PC-9 (cell line): ENCODE measurements at regions of chr5 and their contacts with region 1.

Region 1: GRCh38 chr5:10401498-10401897 is 40.2 kb upstream of the ROPN1L start:
- DNase-seq: no peak
- H3K4me3 ChIP-seq: no peak overlapping the region
- H3K27ac ChIP-seq: no peak overlapping the region
- H3K4me1 ChIP-seq: no peaks in the 10 kb centered on the region
- H3K27me3 ChIP-seq: no peaks in the 10 kb centered on the region
- CTCF ChIP-seq: no peak

Region 2: DNA sequence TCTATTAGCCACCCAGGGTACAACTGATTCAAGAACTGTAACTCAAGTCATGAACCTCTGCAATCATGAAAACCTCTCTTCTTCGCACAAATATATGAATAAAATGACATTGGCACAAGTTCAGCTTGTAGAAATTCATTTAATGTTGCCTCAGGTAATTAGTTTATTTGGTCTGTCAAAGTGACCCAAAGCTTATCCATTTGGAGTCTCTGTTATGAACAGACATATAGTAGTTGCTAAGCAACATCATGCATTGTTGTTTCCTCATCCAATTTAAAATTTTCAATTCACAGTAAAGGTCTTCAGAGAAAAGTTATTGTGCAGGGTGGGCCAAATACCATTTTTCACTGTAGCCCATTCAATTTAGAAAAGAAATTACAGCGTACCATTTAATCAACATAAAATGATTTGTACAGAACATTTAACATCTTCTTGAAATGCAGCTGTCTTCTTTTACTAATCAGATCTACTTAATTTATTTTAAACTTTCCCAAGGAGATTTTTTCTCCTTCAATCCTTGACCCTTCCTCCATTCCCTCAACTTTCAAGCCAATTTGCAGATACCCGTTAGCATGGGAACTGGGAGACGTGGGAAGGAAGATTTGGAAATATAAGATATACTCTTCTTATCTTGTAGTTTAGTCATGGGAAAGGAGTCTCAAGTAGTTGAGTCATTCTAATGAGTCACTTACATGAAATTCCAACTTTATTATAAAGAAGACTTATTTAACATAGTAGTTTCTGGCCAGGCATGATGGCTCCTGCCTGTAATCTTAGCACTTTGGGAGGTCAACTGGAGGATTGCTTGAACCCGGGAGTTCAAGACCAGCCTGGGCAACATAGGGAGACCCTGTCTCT is 383.1 kb before region 1 on chr5:
- CTCF ChIA-PET with region 1: no interaction called
- POLR2A ChIA-PET with region 1: no interaction called
- intact Hi-C with region 1: no loop called
- DNase-seq: peak in 1 of 2 experiments; percentile 85
- H3K4me3 ChIP-seq: no peak overlapping the region
- H3K27ac ChIP-seq: peak overlapping the region; percentile 61
- H3K4me1 ChIP-seq: peaks cover 18% of the 10 kb centered on the region
- H3K27me3 ChIP-seq: no peaks in the 10 kb centered on the region
- CTCF ChIP-seq: no peak

Region 3: GRCh38 chr5:10377081-10377480 is 24.4 kb before region 1 on chr5:
- CTCF ChIA-PET with region 1: no interaction called
- POLR2A ChIA-PET with region 1: interaction called, 14 read pairs
- intact Hi-C with region 1: no loop called
- DNase-seq: no peak
- H3K4me3 ChIP-seq: no peak overlapping the region
- H3K27ac ChIP-seq: no peak overlapping the region
- H3K4me1 ChIP-seq: no peaks in the 10 kb centered on the region
- H3K27me3 ChIP-seq: no peaks in the 10 kb centered on the region
- CTCF ChIP-seq: no peak

Region 4: GRCh38 chr5:10418654-10419345 is 17.3 kb after region 1 on chr5:
- CTCF ChIA-PET with region 1: no interaction called
- POLR2A ChIA-PET with region 1: interaction called, 3 read pairs
- intact Hi-C with region 1: loop called (anchors 2 kb)
- DNase-seq: no peak
- H3K4me3 ChIP-seq: no peak overlapping the region
- H3K27ac ChIP-seq: no peak overlapping the region
- H3K4me1 ChIP-seq: peaks cover 15% of the 10 kb centered on the region
- H3K27me3 ChIP-seq: no peaks in the 10 kb centered on the region
- CTCF ChIP-seq: no peak

Region 5: GRCh38 chr5:10432059-10433008 is 30.8 kb after region 1 on chr5:
- CTCF ChIA-PET with region 1: no interaction called
- POLR2A ChIA-PET with region 1: no interaction called
- intact Hi-C with region 1: no loop called
- DNase-seq: no peak
- H3K4me3 ChIP-seq: no peak overlapping the region
- H3K27ac ChIP-seq: no peak overlapping the region
- H3K4me1 ChIP-seq: no peaks in the 10 kb centered on the region
- H3K27me3 ChIP-seq: no peaks in the 10 kb centered on the region
- CTCF ChIP-seq: no peak

Region 6: GRCh38 chr5:10489810-10490426 is 88.4 kb after region 1 on chr5:
- CTCF ChIA-PET with region 1: no interaction called
- POLR2A ChIA-PET with region 1: no interaction called
- intact Hi-C with region 1: no loop called
- DNase-seq: peak in 1 of 2 experiments; percentile 34
- H3K4me3 ChIP-seq: no peak overlapping the region
- H3K27ac ChIP-seq: no peak overlapping the region
- H3K4me1 ChIP-seq: peaks cover 18% of the 10 kb centered on the region
- H3K27me3 ChIP-seq: no peaks in the 10 kb centered on the region
- CTCF ChIP-seq: no peak